ENCODE measurements at regions of chr3 and their contacts with region 1.

Region 1: DNA sequence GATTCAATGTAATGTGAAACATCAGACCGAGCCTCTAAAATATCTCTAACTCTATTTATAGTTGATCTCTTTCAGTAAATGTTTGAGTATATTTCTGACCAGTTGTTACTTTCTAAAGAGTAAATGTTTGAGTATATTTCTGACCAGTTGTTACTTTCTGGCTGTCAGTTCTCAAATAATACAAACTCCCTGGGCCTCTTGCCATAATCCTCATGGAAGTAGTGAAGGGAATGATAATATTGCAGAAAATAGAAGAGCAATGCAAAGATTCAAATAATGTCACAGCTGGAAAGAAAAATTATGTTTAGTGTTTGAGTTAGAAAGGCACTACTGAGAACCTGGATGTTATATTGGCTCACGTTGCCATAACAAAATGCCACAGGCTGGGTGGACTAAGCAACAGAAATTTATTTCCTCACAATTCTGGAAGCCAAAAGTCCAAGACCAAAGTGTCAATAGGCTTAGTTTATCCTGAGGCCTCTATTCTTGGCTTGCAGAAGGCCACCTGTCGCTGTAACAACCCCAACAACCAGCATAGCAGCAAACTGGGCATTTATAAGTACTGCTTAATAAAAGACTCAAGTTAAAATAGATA is 470.6 kb upstream of the BCHE start:
- DNase-seq: no peak
- H3K4me3 ChIP-seq: no peak overlapping the region
- H3K27ac ChIP-seq: no peak overlapping the region
- H3K4me1 ChIP-seq: no peaks in the 10 kb centered on the region
- CTCF ChIP-seq: no peak

Region 2: DNA sequence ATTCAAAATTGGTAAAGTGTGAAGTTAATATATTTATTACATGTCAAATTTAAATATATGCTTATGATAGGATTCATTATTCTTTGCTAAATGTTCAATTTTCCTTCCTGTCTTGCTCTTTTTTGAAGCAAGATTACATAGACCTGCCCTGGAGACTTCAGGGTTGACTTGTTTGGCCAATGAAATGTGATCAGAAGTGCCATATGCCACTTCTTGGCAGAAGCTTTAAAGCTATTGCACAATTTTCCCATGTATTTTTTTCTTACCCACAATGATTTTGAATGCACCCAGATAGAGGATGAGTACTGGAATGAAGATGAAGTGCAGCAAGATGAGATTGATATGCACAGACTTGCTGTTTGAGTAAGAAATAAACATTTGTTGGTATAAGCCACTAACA is 64.3 kb before region 1 on chr3:
- CTCF ChIA-PET with region 1: no interaction called
- POLR2A ChIA-PET with region 1: no interaction called
- intact Hi-C with region 1: no loop called
- DNase-seq: no peak
- H3K4me3 ChIP-seq: no peak overlapping the region
- H3K27ac ChIP-seq: no peak overlapping the region
- H3K4me1 ChIP-seq: no peaks in the 10 kb centered on the region
- CTCF ChIP-seq: no peak

Region 3: DNA sequence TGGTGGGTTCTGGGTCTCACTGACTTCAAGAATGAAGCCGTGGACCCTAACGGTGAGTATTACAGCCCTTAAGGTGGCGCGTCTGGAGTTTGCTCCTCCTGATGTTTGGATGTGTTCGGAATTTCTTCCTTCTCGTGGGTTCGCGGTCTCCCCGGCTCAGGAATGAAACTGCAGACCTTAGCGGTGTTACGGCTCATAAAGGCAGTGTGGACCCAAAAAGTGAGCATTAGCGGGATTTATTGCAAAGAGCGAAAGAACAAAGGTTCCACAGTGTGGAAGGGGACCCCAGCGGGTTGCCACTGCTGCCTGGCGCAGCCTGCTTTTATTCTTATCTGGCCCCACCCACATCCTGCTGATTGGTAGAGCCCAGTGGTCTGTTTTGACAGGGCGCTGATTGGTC is 50.1 kb before region 1 on chr3:
- CTCF ChIA-PET with region 1: no interaction called
- POLR2A ChIA-PET with region 1: no interaction called
- intact Hi-C with region 1: loop called (anchors 10 kb)
- DNase-seq: no peak
- H3K4me3 ChIP-seq: no peak overlapping the region
- H3K27ac ChIP-seq: no peak overlapping the region
- H3K4me1 ChIP-seq: no peaks in the 10 kb centered on the region
- CTCF ChIP-seq: no peak

Measured in OCI-LY7 (cell line).